ENCODE measurements at regions of chr19 and their contacts with region 1.

Region 1: DNA sequence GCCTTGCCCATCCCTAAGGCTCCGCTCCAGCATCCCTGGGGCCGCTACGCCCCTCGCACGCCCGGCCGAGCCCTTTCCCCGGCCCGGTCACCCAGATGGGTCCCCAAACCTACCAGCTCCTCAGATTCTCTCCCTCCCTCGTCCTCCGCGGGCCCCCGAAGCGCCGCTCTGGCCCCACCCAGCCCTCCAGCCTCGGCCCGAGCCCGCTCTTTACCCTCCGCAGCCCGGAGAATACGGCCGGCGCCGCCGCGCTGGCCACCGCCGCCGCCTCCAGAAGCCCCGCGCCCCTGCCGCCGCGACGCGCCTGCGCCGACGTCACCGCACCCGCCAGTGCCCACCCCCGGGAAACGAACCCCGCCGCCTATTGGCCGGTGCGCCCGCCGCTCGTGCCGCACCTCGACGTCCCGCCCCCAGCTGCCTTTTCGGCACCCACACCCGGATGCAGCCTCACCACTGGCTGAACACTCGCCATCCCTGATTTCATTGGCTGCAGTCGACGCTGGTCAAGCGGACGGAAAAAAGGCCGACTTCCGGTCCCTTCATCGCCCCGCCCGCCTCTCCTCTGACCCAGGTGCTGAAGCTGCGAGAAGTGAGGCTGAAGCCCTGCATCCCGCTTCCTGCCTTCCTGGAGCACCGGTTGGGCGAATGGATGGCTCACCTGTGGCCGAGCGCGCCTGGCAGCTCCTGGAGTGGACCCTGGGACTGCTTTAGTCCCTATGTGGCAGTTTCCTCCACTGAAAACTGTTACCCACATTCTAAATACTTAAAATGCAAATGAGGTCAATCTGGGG is at the start of gene DAPK3:
- DNase-seq: peak; percentile 89 to 98
- H3K4me3 ChIP-seq: peak within 1 kb of the TSS; percentile 78 to 98
- H3K27ac ChIP-seq: peak within 1 kb of the TSS; percentile 99 to 100
- H3K4me1 ChIP-seq: peaks cover 28 to 33% of the 10 kb centered on the region in 2 donors
- H3K27me3 ChIP-seq: no peaks in the 10 kb centered on the region
- CTCF ChIP-seq: no peak
- total RNA-seq, gene DAPK3: 135 TPM

Region 2: GRCh38 chr19:3670796-3671679 is 300.0 kb before region 1 on chr19:
- intact Hi-C with region 1: loop called (anchors 5 kb)
- DNase-seq: peak; percentile 85 to 94
- H3K4me3 ChIP-seq: peak overlapping the region; percentile 31 to 60
- H3K27ac ChIP-seq: peak overlapping the region; percentile 99
- H3K4me1 ChIP-seq: peaks cover 18 to 48% of the 10 kb centered on the region in 2 donors
- H3K27me3 ChIP-seq: no peaks in the 10 kb centered on the region
- CTCF ChIP-seq: no peak

Region 3: GRCh38 chr19:4007021-4007835 is 36.2 kb after region 1 on chr19 and contains the start of gene PIAS4:
- intact Hi-C with region 1: loop called (anchors 1 kb)
- DNase-seq: peak; percentile 86 to 97
- H3K4me3 ChIP-seq: peak within 1 kb of the TSS; percentile 95 to 96
- H3K27ac ChIP-seq: peak within 1 kb of the TSS; percentile 66 to 67
- H3K4me1 ChIP-seq: peaks cover 5 to 29% of the 10 kb centered on the region in 2 donors
- H3K27me3 ChIP-seq: no peaks in the 10 kb centered on the region
- CTCF ChIP-seq: peak in 1 of 3 experiments; percentile 19
- total RNA-seq, gene PIAS4: 30.8 TPM

Measured in ascending aorta (tissue), 2 donors.